Activated CD4-positive, alpha-beta memory T cell treated with anti-CD3 and anti-CD28 coated beads for 36 hours (primary cell): ENCODE measurements at regions of chr2 and their contacts with region 1.

Region 1: GRCh38 chr2:190887089-190887488 is 6.5 kb downstream of the GLS start:
- DNase-seq: no peak
- H3K4me3 Mint-ChIP-seq: no peak overlapping the region
- H3K27ac Mint-ChIP-seq: no peak overlapping the region
- H3K4me1 Mint-ChIP-seq: peaks cover 65% of the 10 kb centered on the region
- H3K27me3 Mint-ChIP-seq: no peaks in the 10 kb centered on the region

Region 2: DNA sequence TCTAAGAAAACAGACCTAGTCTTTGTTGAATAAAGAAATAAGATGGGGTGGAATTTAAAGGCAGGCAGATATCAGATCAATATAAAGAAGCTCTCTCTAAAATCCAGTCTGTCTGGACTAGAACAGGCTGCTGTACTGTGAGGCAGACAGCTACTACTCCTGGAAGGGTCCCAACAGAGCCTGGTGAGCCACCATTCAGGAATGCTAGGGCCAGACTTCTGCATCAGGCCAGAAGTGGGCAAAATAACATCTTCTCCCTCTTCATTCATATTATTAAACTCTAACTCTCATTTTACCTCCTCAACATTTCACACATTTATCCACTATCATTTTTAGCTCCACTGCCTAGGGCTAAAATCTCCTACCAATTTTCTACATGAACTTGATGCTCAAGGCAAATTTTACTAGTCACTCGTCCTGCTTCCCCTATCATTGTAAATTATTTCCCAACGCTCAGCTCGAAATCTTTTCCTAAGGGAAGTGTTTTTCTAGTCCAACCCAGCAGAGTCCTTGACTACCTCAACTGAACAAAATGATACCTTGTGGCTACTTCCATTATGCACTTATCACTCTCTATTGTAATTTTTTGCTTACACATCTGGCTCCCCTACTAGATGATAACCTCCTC is 51.7 kb before region 1 on chr2:
- CTCF ChIA-PET with region 1: no interaction called
- POLR2A ChIA-PET with region 1: no interaction called
- intact Hi-C with region 1: no loop called
- DNase-seq: no peak
- H3K4me3 Mint-ChIP-seq: no peak overlapping the region
- H3K27ac Mint-ChIP-seq: no peak overlapping the region
- H3K4me1 Mint-ChIP-seq: peaks cover 11% of the 10 kb centered on the region
- H3K27me3 Mint-ChIP-seq: no peaks in the 10 kb centered on the region

Region 3: DNA sequence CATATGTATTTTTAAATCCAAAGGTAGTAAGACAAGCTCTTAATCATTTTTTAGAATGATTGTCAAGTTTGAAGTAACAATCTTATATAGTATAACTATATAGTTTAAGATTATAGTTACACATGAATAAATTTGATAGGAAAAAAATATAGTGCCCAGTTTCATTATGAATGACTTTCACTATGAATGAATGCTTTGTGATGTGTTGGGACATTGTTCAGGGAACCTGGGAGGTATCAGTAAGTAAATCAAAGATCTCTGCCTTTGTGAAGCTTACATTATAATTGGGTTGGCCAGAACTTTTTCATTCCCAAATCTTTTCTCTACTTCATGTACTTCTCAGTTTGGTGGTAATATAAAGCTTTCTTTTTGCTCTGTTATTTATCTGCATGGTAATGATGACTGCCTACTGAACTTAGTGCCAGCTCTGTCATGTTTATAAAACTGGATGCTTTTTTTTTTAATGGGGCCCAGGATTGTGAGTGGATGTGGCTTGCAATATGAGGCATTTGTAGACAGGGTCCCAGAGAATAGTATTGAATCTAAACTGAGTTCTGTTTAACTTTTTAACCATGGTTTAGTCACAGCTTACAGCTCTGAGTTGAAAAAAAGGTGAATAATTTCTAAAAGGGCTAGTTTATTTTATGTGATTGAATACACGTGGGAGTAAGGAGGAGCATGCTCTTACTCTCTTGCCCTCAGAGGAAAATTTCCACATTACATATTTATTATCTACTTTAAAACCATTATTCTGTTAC is 16.8 kb after region 1 on chr2:
- CTCF ChIA-PET with region 1: no interaction called
- POLR2A ChIA-PET with region 1: interaction called, 15 read pairs
- intact Hi-C with region 1: loop called (anchors 1 kb)
- DNase-seq: no peak
- H3K4me3 Mint-ChIP-seq: no peak overlapping the region
- H3K27ac Mint-ChIP-seq: peak overlapping the region; percentile 50
- H3K4me1 Mint-ChIP-seq: peaks cover 27% of the 10 kb centered on the region
- H3K27me3 Mint-ChIP-seq: no peaks in the 10 kb centered on the region